H1 (cell line): ENCODE measurements at regions of chr4 and their contacts with region 1.

Region 1: GRCh38 chr4:41977709-41978108 is 3.8 kb upstream of the DCAF4L1 start:
- DNase-seq: no peak
- H3K4me3 ChIP-seq: no peak overlapping the region
- H3K27ac ChIP-seq: no peak overlapping the region
- H3K4me1 ChIP-seq: peaks cover 0 to 4% (median 2%) of the 10 kb centered on the region in 4 experiments; a peak in 3 of 7 replicates
- H3K27me3 ChIP-seq: no peaks in the 10 kb centered on the region
- CTCF ChIP-seq: no peak
- EP300 ChIP-seq: no peak
- POLR2A ChIP-seq: no peak
- RAD21 ChIP-seq: no peak

Region 2: GRCh38 chr4:41921476-41921875 is 56.2 kb before region 1 on chr4:
- CTCF ChIA-PET with region 1: no interaction called
- POLR2A ChIA-PET with region 1: no interaction called
- DNase-seq: no peak
- H3K4me3 ChIP-seq: no peak overlapping the region
- H3K27ac ChIP-seq: no peak overlapping the region
- H3K4me1 ChIP-seq: no peaks in the 10 kb centered on the region
- H3K27me3 ChIP-seq: peaks cover 2 to 5% (median 4%) of the 10 kb centered on the region in 4 experiments; a peak in 5 of 7 replicates
- CTCF ChIP-seq: no peak
- EP300 ChIP-seq: no peak
- POLR2A ChIP-seq: no peak
- RAD21 ChIP-seq: no peak

Region 3: DNA sequence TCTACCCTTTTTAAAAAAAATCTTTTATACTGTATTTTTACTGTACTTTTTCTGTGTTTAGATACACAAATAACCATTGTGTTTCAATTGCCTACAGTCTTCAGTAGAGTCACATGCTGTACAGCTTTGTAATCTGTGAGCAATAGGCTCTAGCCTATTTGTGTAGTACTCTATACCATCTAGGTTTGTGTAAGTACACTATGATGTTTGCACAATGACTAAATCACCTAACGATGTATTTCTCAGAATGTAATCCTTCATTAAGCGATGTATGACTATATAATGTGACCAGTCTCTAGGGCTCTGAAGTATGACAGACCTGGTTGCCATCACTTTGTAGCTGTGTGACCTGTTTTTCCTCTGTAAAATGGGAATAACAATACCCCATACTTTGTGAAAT is 10.3 kb before region 1 on chr4:
- CTCF ChIA-PET with region 1: interaction called, 15 read pairs
- POLR2A ChIA-PET with region 1: interaction called, 17 read pairs
- DNase-seq: no peak
- H3K4me3 ChIP-seq: no peak overlapping the region
- H3K27ac ChIP-seq: no peak overlapping the region
- H3K4me1 ChIP-seq: no peaks in the 10 kb centered on the region
- H3K27me3 ChIP-seq: no peaks in the 10 kb centered on the region
- CTCF ChIP-seq: no peak
- EP300 ChIP-seq: no peak
- POLR2A ChIP-seq: no peak
- RAD21 ChIP-seq: no peak